Activated CD4-positive, alpha-beta memory T cell treated with anti-CD3 and anti-CD28 coated beads for 36 hours (primary cell): ENCODE measurements at regions of chr14 and their contacts with region 1.

Region 1: GRCh38 chr14:99320105-99320572 is 48.1 kb upstream of the BCL11B start:
- DNase-seq: peak; percentile 88
- H3K4me3 Mint-ChIP-seq: no peak overlapping the region
- H3K27ac Mint-ChIP-seq: no peak overlapping the region
- H3K4me1 Mint-ChIP-seq: peaks cover 4% of the 10 kb centered on the region
- H3K27me3 Mint-ChIP-seq: no peaks in the 10 kb centered on the region

Region 2: DNA sequence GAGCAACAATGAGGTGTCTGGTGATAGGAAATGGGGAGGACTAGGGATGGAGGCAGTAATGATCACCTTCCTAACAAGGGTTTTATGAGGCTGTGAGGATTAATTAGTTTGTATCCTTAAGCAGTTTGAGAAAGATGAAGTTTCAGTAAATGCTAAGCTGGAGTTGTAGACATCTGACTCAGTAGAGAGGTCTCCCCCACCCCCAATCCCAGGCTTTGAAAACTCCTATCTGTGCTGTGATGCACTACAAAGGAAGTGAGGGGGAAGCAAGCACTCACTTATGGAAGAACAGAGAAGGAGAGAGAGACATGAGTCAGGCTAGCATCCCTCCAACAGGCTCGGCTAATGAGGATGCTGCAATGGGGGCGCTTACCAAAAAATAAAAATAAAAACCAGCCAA is 42.6 kb before region 1 on chr14:
- CTCF ChIA-PET with region 1: interaction called, 13 read pairs
- POLR2A ChIA-PET with region 1: no interaction called
- intact Hi-C with region 1: no loop called
- DNase-seq: no peak
- H3K4me3 Mint-ChIP-seq: no peak overlapping the region
- H3K27ac Mint-ChIP-seq: no peak overlapping the region
- H3K4me1 Mint-ChIP-seq: peaks cover 35% of the 10 kb centered on the region
- H3K27me3 Mint-ChIP-seq: peaks cover 2% of the 10 kb centered on the region

Region 3: GRCh38 chr14:99415496-99416281 is 95.5 kb after region 1 on chr14:
- CTCF ChIA-PET with region 1: interaction called, 62 read pairs
- POLR2A ChIA-PET with region 1: no interaction called
- intact Hi-C with region 1: loop called (anchors 1 kb)
- DNase-seq: peak; percentile 70
- H3K4me3 Mint-ChIP-seq: no peak overlapping the region
- H3K27ac Mint-ChIP-seq: no peak overlapping the region
- H3K4me1 Mint-ChIP-seq: peaks cover 28% of the 10 kb centered on the region
- H3K27me3 Mint-ChIP-seq: no peaks in the 10 kb centered on the region